ENCODE measurements at regions of chr20 and their contacts with region 1.

Region 1: DNA sequence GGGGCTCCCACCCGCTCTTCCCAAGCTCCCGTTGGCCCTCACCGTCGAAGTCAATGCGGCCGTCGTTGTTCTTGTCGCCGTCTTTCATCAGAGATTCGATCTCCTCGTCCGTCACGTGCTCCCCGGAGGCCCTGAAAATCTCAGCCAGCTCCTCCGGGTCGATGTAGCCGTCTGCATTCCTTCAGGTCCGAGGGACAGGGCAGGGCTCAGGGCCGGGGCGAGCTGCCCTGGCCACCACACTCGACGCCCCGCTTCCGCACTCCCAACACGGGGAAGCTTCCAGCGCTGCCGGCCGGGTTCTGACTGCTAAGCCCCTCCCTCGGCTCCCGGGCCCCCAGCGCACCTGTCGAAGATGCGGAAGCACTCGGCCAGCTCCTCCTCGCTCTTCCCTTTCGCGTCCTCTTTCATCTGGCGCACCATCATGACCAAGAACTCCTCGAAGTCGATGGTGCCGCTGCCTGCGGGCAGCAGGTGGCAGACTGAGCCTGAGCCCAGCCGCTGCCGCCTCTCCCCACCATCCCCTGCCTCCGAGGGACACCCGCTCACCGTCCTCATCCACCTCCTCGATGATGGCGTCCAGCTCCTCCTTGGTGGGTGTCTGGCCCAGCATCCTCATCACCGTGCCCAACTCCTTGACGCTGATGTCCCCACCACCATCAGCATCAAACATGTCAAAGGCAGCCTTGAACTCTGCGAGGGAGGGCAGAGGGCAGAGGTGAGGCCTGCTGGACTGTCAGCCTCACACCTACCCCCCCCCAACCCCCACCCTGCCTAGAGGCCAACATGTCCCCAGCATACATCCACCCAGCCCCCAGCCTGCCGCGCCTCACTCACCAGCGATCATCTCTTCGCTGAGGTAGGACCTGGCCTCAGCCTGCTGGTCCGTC is 2.9 kb downstream of the TNNC2 start:
- DNase-seq: peak; percentile 81
- ATAC-seq: peak; percentile 86
- H3K4me3 Mint-ChIP-seq: peak overlapping the region; percentile 61
- H3K27ac Mint-ChIP-seq: 0 out of 2 replicates have a peak overlapping the region, but pooled peaks have one; percentile 48
- H3K4me1 Mint-ChIP-seq: peaks cover 26% of the 10 kb centered on the region
- H3K27me3 Mint-ChIP-seq: peaks cover 23% of the 10 kb centered on the region
- CTCF ChIP-seq: no peak

Region 2: DNA sequence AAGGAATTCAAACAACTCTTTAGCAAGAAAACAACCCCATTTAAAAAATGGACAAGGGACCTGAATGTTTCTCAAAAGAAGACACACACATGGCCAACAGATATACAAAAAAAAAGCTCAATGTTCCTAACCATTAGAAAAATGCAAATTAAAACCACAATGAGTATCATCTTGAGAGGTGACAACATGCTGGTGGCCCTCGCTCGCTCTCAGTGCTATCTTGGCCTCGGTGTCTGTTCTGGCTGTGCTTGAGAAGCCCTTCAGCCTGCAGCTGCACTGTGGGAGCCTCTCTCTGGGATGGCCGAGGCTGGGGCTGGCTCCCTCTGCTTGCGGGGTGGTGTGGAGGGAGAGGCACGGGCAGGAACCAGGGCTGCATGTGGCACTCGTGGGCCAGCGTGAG is 88.6 kb before region 1 on chr20:
- CTCF ChIA-PET with region 1: no interaction called
- POLR2A ChIA-PET with region 1: no interaction called
- DNase-seq: no peak
- ATAC-seq: no peak
- H3K4me3 Mint-ChIP-seq: no peak overlapping the region
- H3K27ac Mint-ChIP-seq: no peak overlapping the region
- H3K4me1 Mint-ChIP-seq: no peaks in the 10 kb centered on the region
- H3K27me3 Mint-ChIP-seq: no peaks in the 10 kb centered on the region; the same call in none of the 2 replicates
- CTCF ChIP-seq: no peak

Region 3: DNA sequence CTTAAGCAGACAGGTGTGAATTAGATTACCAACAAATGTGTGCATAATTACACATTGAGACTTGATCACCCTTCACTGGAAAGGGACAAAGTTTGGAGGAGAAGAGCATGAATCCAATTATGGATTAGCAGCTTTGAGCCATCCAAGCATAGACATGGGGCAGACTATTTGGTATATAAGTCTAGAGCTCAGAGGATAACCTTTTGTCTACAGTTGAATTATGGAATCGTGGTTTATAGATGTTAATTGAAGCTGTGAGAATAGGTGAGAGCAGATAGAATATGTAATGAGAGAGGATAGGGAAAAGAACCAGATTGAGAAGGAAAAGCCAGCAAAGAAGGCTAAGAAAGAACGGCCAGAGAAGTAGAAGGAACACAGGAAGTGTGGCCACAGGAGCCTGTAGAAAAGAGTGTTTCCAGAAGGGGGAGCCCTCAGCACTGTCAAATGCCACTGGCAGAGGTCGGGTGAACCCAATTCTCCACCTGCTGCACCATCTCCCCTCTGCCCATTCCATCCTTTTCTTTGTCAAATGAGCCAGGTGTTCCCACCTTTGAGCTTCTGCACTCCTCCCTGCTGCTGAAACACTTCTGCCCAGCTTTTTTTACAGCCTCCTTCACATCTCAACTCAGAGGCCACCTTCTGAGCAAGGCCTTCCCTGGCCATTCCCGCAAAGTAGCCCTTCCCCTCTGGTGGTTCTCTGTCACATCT is 25.1 kb before region 1 on chr20:
- CTCF ChIA-PET with region 1: interaction called, 15 read pairs
- POLR2A ChIA-PET with region 1: no interaction called
- DNase-seq: peak; percentile 75
- ATAC-seq: peak; percentile 99
- H3K4me3 Mint-ChIP-seq: no peak overlapping the region
- H3K27ac Mint-ChIP-seq: no peak overlapping the region
- H3K4me1 Mint-ChIP-seq: peaks cover 4% of the 10 kb centered on the region; the same call in 1 of the 2 replicates
- H3K27me3 Mint-ChIP-seq: no peaks in the 10 kb centered on the region
- CTCF ChIP-seq: peak; percentile 64

Region 4: GRCh38 chr20:45840700-45841198 is 16.6 kb after region 1 on chr20:
- CTCF ChIA-PET with region 1: interaction called, 17 read pairs
- POLR2A ChIA-PET with region 1: no interaction called
- DNase-seq: no peak
- ATAC-seq: no peak; the same call in 1 of the 2 replicates
- H3K4me3 Mint-ChIP-seq: no peak overlapping the region
- H3K27ac Mint-ChIP-seq: no peak overlapping the region
- H3K4me1 Mint-ChIP-seq: no peaks in the 10 kb centered on the region; the same call in 1 of the 2 replicates
- H3K27me3 Mint-ChIP-seq: no peaks in the 10 kb centered on the region
- CTCF ChIP-seq: no peak

Region 5: GRCh38 chr20:45857114-45857881 is 33.1 kb after region 1 on chr20 and contains the starts of genes ACOT8 and ZSWIM3:
- CTCF ChIA-PET with region 1: interaction called, 12 read pairs
- POLR2A ChIA-PET with region 1: no interaction called
- DNase-seq: peak; percentile 95
- ATAC-seq: peak; percentile 90
- H3K4me3 Mint-ChIP-seq: peak within 1 kb of the TSS; percentile 92
- H3K27ac Mint-ChIP-seq: peak within 1 kb of the TSS; percentile 95
- H3K4me1 Mint-ChIP-seq: peaks cover 60% of the 10 kb centered on the region
- H3K27me3 Mint-ChIP-seq: no peaks in the 10 kb centered on the region
- CTCF ChIP-seq: no peak
- total RNA-seq, gene ACOT8: 38.1 to 41.1 TPM (median 39.4 TPM) in 3 replicates
- total RNA-seq, gene ZSWIM3: 3.4 to 5.4 TPM (median 4.7 TPM) in 3 replicates

Region 6: GRCh38 chr20:45934586-45935415 is 110.6 kb after region 1 on chr20 and contains the start of gene PCIF1:
- CTCF ChIA-PET with region 1: interaction called, 12 read pairs
- POLR2A ChIA-PET with region 1: interaction called, 3 read pairs
- DNase-seq: peak; percentile 98
- ATAC-seq: peak; percentile 63
- H3K4me3 Mint-ChIP-seq: peak within 1 kb of the TSS; percentile 96
- H3K27ac Mint-ChIP-seq: peak within 1 kb of the TSS; percentile 100
- H3K4me1 Mint-ChIP-seq: peaks cover 39% of the 10 kb centered on the region
- H3K27me3 Mint-ChIP-seq: no peaks in the 10 kb centered on the region
- CTCF ChIP-seq: no peak
- total RNA-seq, gene PCIF1: 37.7 to 42.2 TPM (median 39.4 TPM) in 3 replicates

Region 7: GRCh38 chr20:46013826-46014516 is 189.8 kb after region 1 on chr20:
- CTCF ChIA-PET with region 1: interaction called, 16 read pairs
- POLR2A ChIA-PET with region 1: interaction called, 3 read pairs
- DNase-seq: peak; percentile 91
- ATAC-seq: peak; percentile 60
- H3K4me3 Mint-ChIP-seq: peak overlapping the region; percentile 65
- H3K27ac Mint-ChIP-seq: no peak overlapping the region; the same call in 1 of the 2 replicates
- H3K4me1 Mint-ChIP-seq: peaks cover 39% of the 10 kb centered on the region
- H3K27me3 Mint-ChIP-seq: peaks cover 31% of the 10 kb centered on the region
- CTCF ChIP-seq: peak; percentile 83